Motor neuron (in vitro differentiated cells): ENCODE measurements at regions of chr2 and their contacts with region 1.

Region 1: GRCh38 chr2:42663106-42663780 is 94.8 kb downstream of the MTA3 start:
- ATAC-seq: peak; percentile 71 to 92 (median 84)
- H3K4me3 ChIP-seq: no peak overlapping the region
- H3K27ac ChIP-seq: no peak overlapping the region
- H3K4me1 ChIP-seq: peaks cover 6 to 11% of the 10 kb centered on the region in 2 donors

Region 2: DNA sequence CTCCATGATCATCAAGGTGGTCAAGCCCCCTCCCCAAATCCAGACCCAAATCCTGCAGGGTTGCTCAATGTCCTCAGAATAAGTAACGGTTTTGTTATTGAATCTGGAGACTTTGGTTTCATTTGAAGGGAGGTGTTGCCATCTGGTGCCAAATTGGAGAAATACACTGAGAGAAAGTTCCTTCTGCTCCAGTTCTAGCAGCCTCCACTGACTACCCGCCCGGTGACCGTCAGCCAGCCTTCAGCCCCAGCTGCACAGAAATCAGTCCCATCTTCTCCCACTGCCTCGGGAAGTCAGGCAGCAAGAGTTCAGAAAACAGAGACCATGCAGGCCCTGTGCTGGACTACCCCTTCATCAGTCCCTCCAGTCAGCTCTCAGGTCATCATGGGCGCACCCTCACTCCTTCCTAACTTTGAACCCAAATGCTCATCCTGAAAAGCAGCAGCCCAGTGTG is 576.7 kb before region 1 on chr2:
- in situ Hi-C with region 1: loop called in 1 of 9 experiments (anchors 25 kb)
- ATAC-seq: peak; percentile 23 to 83 (median 62)
- H3K4me3 ChIP-seq: no peak overlapping the region
- H3K27ac ChIP-seq: no peak overlapping the region
- H3K4me1 ChIP-seq: peaks cover 0 to 16% of the 10 kb centered on the region in 2 donors

Region 3: GRCh38 chr2:42494355-42495233 is 168.6 kb before region 1 on chr2:
- in situ Hi-C with region 1: loop called in 1 of 9 experiments (anchors 10 kb)
- ATAC-seq: peak; percentile 29 to 65 (median 58)
- H3K4me3 ChIP-seq: peak overlapping the region; percentile 55 to 91 (median 62)
- H3K27ac ChIP-seq: no peak overlapping the region
- H3K4me1 ChIP-seq: no peaks in the 10 kb centered on the region

Region 4: GRCh38 chr2:42513257-42513918 is 149.9 kb before region 1 on chr2:
- in situ Hi-C with region 1: loop called in 3 of 9 experiments (anchors 10 to 25 kb)
- ATAC-seq: peak in 3 of 8 experiments; percentile 54 to 91 (median 78)
- H3K4me3 ChIP-seq: no peak overlapping the region
- H3K27ac ChIP-seq: no peak overlapping the region
- H3K4me1 ChIP-seq: peaks cover 0 to 8% of the 10 kb centered on the region in 2 donors

Region 5: GRCh38 chr2:43068041-43068533 is 404.8 kb after region 1 on chr2:
- in situ Hi-C with region 1: no loop called
- ATAC-seq: peak in 4 of 8 experiments; percentile 35 to 56 (median 50)
- H3K4me3 ChIP-seq: no peak overlapping the region
- H3K27ac ChIP-seq: no peak overlapping the region
- H3K4me1 ChIP-seq: peaks cover 24 to 29% of the 10 kb centered on the region in 2 donors